Calu3 (cell line): ENCODE measurements at regions of chr10 and their contacts with region 1.

Region 1: DNA sequence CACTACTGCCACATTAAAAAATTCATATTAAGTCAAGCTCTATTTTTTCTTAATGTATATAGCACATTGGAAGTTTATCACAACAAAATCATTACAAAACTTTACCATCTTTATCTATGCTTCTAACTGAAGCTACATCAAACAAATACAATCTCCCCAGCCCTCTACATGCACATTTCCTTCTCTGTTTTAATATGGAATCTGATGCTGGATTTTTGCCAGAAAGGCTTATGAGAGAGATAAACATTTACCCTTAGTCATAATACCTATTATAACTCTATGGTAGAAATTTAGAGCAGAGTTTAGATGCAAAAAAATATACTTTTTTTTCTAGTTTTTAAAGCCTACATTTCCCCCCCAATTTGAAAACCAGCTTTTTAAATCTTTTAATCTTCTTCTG is 1198.6 kb downstream of the GATA3 start:
- DNase-seq: no peak
- H3K4me3 Mint-ChIP-seq: no peak overlapping the region
- H3K27ac Mint-ChIP-seq: no peak overlapping the region
- H3K4me1 Mint-ChIP-seq: peaks cover 18% of the 10 kb centered on the region
- H3K27me3 Mint-ChIP-seq: no peaks in the 10 kb centered on the region
- CTCF ChIP-seq: no peak

Region 2: DNA sequence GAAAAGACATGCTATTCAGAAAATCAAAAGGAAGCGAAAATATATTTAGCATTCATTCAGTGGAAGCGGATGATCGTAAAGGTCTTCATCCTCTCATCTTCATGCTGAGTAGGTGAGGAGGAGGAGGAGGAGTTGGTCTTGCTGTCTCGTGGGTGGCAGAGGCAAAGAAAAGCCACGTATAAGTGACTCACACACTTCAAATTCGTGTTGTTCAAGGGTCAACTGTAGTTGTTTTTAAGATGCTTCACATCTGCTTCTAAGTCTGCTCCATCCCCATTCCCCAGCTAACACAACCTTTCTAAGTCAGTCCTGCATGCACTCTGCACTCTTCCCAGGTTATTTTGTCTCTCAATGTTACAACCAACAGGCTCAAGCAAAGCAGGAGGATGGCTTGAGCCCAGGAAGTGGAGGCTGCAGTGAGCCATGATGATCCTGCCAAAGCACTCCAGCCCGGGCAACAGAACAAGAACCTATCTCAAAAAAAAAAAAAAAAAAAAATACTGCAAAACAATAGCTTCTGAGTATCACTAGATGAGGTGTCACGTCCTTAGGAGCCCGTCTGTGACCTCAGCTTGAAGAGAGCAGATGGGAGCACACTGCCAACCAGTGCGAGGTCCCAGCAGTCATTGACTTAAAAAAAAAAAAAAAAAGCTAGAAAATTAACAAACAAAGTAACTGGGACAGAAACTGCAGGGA is 1912.8 kb before region 1 on chr10:
- CTCF ChIA-PET with region 1: interaction called, 10 read pairs
- intact Hi-C with region 1: no loop called
- DNase-seq: no peak
- H3K4me3 Mint-ChIP-seq: no peak overlapping the region
- H3K27ac Mint-ChIP-seq: no peak overlapping the region
- H3K4me1 Mint-ChIP-seq: no peaks in the 10 kb centered on the region
- H3K27me3 Mint-ChIP-seq: peaks cover 26% of the 10 kb centered on the region
- CTCF ChIP-seq: no peak